Naive thymus-derived CD4-positive, alpha-beta T cell (primary cell): ENCODE measurements at regions of chr21 and their contacts with region 1.

Region 1: GRCh38 chr21:31088315-31088714 is 50.0 kb upstream of the KRTAP19-8 start:
- DNase-seq: peak in 1 of 9 donors; percentile 6
- ATAC-seq: no peak
- H3K4me3 ChIP-seq: no peak overlapping the region
- H3K4me3 Mint-ChIP-seq: peak overlapping the region in 1 of 10 donors; percentile 28
- H3K27ac ChIP-seq: no peak overlapping the region
- H3K27ac Mint-ChIP-seq: peak overlapping the region in 1 of 9 donors; percentile 39
- H3K4me1 ChIP-seq: no peaks in the 10 kb centered on the region
- H3K4me1 Mint-ChIP-seq: peaks cover 0 to 17% (median 9%) of the 10 kb centered on the region in 7 donors
- H3K27me3 ChIP-seq: no peaks in the 10 kb centered on the region
- H3K27me3 Mint-ChIP-seq: peaks cover 0 to 41% (median 4%) of the 10 kb centered on the region in 5 donors

Region 2: DNA sequence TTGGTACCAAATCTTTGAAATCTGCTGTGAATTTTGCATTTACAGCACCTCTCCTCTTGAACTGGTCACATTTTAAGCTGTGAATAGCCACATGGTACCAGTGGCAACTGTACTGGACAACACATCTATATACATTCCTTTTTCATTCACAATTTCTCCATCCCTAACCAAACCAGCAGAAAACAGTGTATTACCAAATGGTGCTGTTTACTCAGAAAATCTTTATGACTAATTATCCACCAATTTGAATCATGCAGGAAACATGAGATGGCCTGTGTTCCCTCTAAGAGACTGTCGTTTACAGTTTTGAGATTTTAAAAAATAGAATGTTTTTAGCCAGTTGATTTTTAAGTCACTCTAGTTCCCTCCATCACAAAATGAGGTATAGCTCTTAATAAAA is 1997.3 kb before region 1 on chr21:
- CTCF ChIA-PET with region 1: no interaction called
- POLR2A ChIA-PET with region 1: no interaction called
- intact Hi-C with region 1: loop called in 1 of 2 experiments (anchors 5 kb)
- DNase-seq: no peak
- ATAC-seq: peak; percentile 9
- H3K4me3 ChIP-seq: no peak overlapping the region
- H3K4me3 Mint-ChIP-seq: no peak overlapping the region
- H3K27ac ChIP-seq: no peak overlapping the region
- H3K27ac Mint-ChIP-seq: no peak overlapping the region
- H3K4me1 ChIP-seq: no peaks in the 10 kb centered on the region
- H3K4me1 Mint-ChIP-seq: peaks cover 0 to 9% (median 0%) of the 10 kb centered on the region in 7 donors
- H3K27me3 ChIP-seq: no peaks in the 10 kb centered on the region
- H3K27me3 Mint-ChIP-seq: peaks cover 0 to 3% (median 0%) of the 10 kb centered on the region in 5 donors

Region 3: GRCh38 chr21:30044445-30045064 is 1043.8 kb before region 1 on chr21:
- CTCF ChIA-PET with region 1: interaction called, 5 read pairs
- POLR2A ChIA-PET with region 1: no interaction called
- intact Hi-C with region 1: loop called in 1 of 2 experiments (anchors 2 kb)
- DNase-seq: peak in 3 of 9 donors; percentile 3 to 19 (median 6)
- ATAC-seq: no peak
- H3K4me3 ChIP-seq: no peak overlapping the region
- H3K4me3 Mint-ChIP-seq: no peak overlapping the region
- H3K27ac ChIP-seq: no peak overlapping the region
- H3K27ac Mint-ChIP-seq: no peak overlapping the region
- H3K4me1 ChIP-seq: no peaks in the 10 kb centered on the region
- H3K4me1 Mint-ChIP-seq: no peaks in the 10 kb centered on the region
- H3K27me3 ChIP-seq: no peaks in the 10 kb centered on the region
- H3K27me3 Mint-ChIP-seq: peaks cover 0 to 12% (median 8%) of the 10 kb centered on the region in 5 donors

Region 4: DNA sequence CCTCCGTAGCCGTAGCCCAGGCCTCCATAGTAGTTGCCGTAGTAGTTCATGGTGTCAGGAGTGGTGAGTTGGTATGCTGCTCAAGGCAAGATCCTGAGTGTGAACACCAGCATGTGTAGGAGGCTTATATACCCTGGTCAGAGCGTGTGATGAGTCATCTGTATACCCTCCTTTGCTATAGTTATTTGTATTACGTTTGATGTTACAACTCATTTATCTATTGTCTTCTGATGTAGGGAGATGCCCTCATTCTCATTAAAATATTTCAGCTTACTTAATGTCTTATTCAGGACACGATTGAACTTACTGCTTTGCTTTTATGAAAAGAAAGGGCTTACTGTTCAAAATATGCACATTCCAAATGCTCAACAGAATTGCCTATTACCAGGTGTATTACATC is 586.3 kb before region 1 on chr21 and contains the start of gene KRTAP19-5:
- CTCF ChIA-PET with region 1: no interaction called
- POLR2A ChIA-PET with region 1: no interaction called
- intact Hi-C with region 1: loop called (anchors 2 kb)
- DNase-seq: no peak
- ATAC-seq: no peak
- H3K4me3 ChIP-seq: no peak within 1 kb of the TSS
- H3K4me3 Mint-ChIP-seq: no peak within 1 kb of the TSS
- H3K27ac ChIP-seq: no peak within 1 kb of the TSS
- H3K27ac Mint-ChIP-seq: no peak within 1 kb of the TSS
- H3K4me1 ChIP-seq: no peaks in the 10 kb centered on the region
- H3K4me1 Mint-ChIP-seq: no peaks in the 10 kb centered on the region
- H3K27me3 ChIP-seq: no peaks in the 10 kb centered on the region
- H3K27me3 Mint-ChIP-seq: peaks cover 0 to 6% (median 4%) of the 10 kb centered on the region in 5 donors
- total RNA-seq, gene KRTAP19-5: not detected

Region 5: GRCh38 chr21:30831194-30831765 is 257.0 kb before region 1 on chr21:
- CTCF ChIA-PET with region 1: interaction called, 3 read pairs
- POLR2A ChIA-PET with region 1: no interaction called
- intact Hi-C with region 1: loop called in 1 of 2 experiments (anchors 1 kb)
- DNase-seq: peak in 5 of 9 donors; percentile 13 to 32 (median 32)
- ATAC-seq: no peak
- H3K4me3 ChIP-seq: no peak overlapping the region
- H3K4me3 Mint-ChIP-seq: no peak overlapping the region
- H3K27ac ChIP-seq: no peak overlapping the region
- H3K27ac Mint-ChIP-seq: no peak overlapping the region
- H3K4me1 ChIP-seq: no peaks in the 10 kb centered on the region
- H3K4me1 Mint-ChIP-seq: no peaks in the 10 kb centered on the region
- H3K27me3 ChIP-seq: no peaks in the 10 kb centered on the region
- H3K27me3 Mint-ChIP-seq: peaks cover 3 to 26% (median 10%) of the 10 kb centered on the region in 5 donors

Region 6: GRCh38 chr21:31124010-31124409 is 35.7 kb after region 1 on chr21:
- CTCF ChIA-PET with region 1: no interaction called
- POLR2A ChIA-PET with region 1: no interaction called
- intact Hi-C with region 1: no loop called
- DNase-seq: no peak
- ATAC-seq: peak; percentile 66
- H3K4me3 ChIP-seq: no peak overlapping the region
- H3K4me3 Mint-ChIP-seq: no peak overlapping the region
- H3K27ac ChIP-seq: no peak overlapping the region
- H3K27ac Mint-ChIP-seq: peak overlapping the region in 5 of 9 donors; percentile 14 to 79 (median 72)
- H3K4me1 ChIP-seq: no peaks in the 10 kb centered on the region
- H3K4me1 Mint-ChIP-seq: peaks cover 0 to 7% (median 0%) of the 10 kb centered on the region in 7 donors
- H3K27me3 ChIP-seq: no peaks in the 10 kb centered on the region
- H3K27me3 Mint-ChIP-seq: no peaks in the 10 kb centered on the region

Region 7: DNA sequence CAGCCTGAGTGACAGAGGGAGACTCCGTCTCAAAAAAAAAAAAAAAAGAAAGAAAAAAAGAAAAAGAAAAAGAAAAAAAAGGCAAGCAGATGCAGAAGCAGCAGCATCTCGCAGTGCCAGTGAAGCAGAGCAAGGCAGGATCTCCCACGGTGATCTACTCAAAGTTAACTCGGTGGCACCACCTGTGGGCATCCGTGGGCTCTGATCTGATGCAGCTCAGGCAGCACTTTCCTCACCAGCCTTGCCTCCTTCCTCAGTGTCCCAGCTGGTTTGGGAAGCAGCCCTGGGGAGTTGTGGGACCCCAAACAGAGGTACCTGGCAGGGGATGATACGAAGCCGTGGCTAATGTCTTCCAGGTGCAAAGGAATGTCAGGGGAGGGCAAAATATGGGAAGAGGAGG is 54.3 kb after region 1 on chr21:
- CTCF ChIA-PET with region 1: no interaction called
- POLR2A ChIA-PET with region 1: no interaction called
- intact Hi-C with region 1: no loop called
- DNase-seq: peak in 7 of 9 donors; percentile 34 to 64 (median 52)
- ATAC-seq: peak; percentile 90
- H3K4me3 ChIP-seq: no peak overlapping the region
- H3K4me3 Mint-ChIP-seq: peak overlapping the region in 1 of 10 donors; percentile 16
- H3K27ac ChIP-seq: no peak overlapping the region
- H3K27ac Mint-ChIP-seq: peak overlapping the region in 2 of 9 donors; percentile 28 to 41
- H3K4me1 ChIP-seq: peaks cover 0 to 20% of the 10 kb centered on the region in 2 donors
- H3K4me1 Mint-ChIP-seq: peaks cover 8 to 70% (median 50%) of the 10 kb centered on the region in 7 donors
- H3K27me3 ChIP-seq: no peaks in the 10 kb centered on the region
- H3K27me3 Mint-ChIP-seq: no peaks in the 10 kb centered on the region